ENCODE measurements at regions of chr2 and their contacts with region 1.

Region 1: DNA sequence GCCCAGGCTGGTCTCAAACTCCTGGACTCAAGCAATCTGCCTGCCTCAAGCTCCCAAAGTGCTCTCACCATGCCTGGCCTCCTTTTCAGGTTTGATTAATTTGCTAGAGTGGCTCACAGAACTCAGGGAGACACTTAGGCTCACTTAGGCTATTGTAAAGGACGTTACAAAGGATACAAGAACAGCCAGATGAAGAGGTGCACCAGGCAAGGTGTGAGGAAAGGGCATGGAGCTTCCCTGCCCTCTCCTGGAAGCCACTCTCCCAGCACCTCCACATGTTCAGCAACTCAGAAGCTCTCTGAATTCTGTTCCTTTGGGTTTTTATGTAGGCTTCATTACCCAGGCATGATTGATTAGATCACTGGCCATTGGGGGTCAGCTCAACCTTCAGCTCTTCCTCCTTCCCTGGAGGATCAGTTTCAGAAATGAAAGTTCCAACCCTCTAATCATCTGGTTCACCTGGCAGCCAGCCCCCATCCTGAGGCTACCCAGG is 78.7 kb upstream of the RGPD5 start:
- DNase-seq: no peak
- ATAC-seq: no peak
- H3K4me3 ChIP-seq: no peak overlapping the region
- H3K27ac ChIP-seq: no peak overlapping the region
- H3K4me1 ChIP-seq: peaks cover 4% of the 10 kb centered on the region
- H3K27me3 ChIP-seq: no peaks in the 10 kb centered on the region
- CTCF ChIP-seq: peak; percentile 35

Region 2: GRCh38 chr2:109529532-109530449 is 185.6 kb before region 1 on chr2:
- intact Hi-C with region 1: no loop called
- DNase-seq: no peak
- ATAC-seq: peak in 1 of 4 donors; percentile 23
- H3K4me3 ChIP-seq: no peak overlapping the region
- H3K27ac ChIP-seq: no peak overlapping the region
- H3K4me1 ChIP-seq: no peaks in the 10 kb centered on the region
- H3K27me3 ChIP-seq: no peaks in the 10 kb centered on the region
- CTCF ChIP-seq: no peak

Region 3: DNA sequence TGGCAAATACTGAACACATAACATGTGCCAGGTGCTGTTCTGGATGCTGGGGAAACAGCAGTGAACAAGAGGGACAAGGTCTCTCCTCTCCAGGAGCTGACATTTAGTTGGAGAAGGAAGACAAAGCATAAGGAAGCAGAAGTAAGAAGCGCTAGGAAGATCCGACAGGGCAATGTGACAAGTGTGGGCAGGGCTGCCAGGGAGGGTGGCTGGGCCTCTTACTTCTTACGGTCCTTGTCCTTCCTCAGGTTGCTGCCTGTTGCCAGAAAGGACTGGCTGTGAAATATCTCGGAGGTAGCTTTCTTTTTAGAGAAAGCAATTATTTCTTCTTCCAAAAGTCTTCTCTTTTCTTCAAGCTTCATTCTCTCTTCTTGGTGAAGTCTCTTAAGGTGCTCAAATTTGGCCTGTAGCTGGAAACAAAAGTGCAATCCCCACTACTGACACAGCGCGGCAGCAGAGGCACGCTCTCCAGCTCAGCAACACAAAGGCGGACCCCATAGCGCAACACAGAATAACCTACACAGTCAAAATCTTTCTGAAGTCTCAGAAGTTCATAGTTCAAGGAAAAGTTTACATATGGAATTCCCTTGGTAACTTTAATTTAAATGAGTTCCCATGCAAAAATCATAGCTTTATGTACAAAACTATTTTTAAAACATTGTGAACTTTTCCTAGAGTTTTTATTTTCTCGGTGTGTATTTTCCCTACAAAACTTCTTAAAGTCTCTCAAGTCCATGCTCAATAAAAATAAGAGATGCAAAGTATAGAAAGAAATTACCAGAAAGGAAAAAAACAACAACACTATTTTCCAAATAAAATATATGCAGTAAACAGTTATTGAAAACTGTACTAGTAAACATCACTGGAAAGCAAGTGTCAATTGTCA is 169.3 kb before region 1 on chr2:
- intact Hi-C with region 1: loop called in 1 of 2 experiments (anchors 5 kb)
- DNase-seq: peak; percentile 53 to 75
- ATAC-seq: peak; percentile 84 to 94 (median 88)
- H3K4me3 ChIP-seq: no peak overlapping the region
- H3K27ac ChIP-seq: no peak overlapping the region
- H3K4me1 ChIP-seq: no peaks in the 10 kb centered on the region
- H3K27me3 ChIP-seq: peaks cover 0 to 4% (median 0%) of the 10 kb centered on the region in 3 donors
- CTCF ChIP-seq: peak; percentile 92

Region 4: DNA sequence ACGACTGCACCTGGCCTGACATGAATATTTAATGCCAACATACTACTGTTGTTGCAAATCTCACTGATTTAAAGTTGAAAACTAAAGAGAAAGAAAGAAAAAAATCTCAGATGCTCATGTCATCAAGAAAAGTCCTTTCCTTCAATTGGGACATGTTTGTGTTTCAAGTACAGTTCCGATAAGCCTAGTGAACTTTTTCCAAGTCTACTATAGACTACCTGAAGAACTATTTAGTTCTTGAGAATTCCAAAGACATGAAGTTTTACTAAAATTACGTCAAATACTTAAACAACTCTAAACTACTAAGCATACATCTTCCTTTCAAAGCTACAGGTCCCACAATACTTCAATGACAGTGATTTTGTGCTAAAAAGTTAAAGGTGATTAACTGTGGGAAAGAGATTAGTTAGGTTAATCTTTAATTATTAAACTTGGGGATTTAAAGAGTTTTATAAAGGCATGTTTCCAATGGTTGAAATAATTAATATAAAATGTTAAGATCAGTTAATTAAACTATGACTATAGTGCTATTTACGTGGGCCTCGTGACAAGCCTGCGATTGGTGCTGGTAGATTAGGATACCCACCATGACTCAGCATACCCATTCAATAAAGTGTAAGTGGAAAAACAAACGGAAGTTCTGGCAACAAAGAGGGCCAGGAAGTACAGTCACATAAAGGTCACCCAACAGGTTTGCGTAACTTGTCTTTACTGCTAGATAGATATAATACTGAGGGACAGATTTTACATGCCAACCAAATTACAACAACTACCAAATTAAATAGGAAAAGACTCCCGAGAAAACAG is 157.1 kb before region 1 on chr2:
- intact Hi-C with region 1: no loop called
- DNase-seq: no peak
- ATAC-seq: peak in 3 of 4 donors; percentile 35 to 54 (median 49)
- H3K4me3 ChIP-seq: no peak overlapping the region
- H3K27ac ChIP-seq: no peak overlapping the region
- H3K4me1 ChIP-seq: no peaks in the 10 kb centered on the region
- H3K27me3 ChIP-seq: no peaks in the 10 kb centered on the region
- CTCF ChIP-seq: no peak

Measured in psoas muscle (tissue), 8 donors.